ENCODE measurements at regions of chrX and their contacts with region 1.

Region 1: DNA sequence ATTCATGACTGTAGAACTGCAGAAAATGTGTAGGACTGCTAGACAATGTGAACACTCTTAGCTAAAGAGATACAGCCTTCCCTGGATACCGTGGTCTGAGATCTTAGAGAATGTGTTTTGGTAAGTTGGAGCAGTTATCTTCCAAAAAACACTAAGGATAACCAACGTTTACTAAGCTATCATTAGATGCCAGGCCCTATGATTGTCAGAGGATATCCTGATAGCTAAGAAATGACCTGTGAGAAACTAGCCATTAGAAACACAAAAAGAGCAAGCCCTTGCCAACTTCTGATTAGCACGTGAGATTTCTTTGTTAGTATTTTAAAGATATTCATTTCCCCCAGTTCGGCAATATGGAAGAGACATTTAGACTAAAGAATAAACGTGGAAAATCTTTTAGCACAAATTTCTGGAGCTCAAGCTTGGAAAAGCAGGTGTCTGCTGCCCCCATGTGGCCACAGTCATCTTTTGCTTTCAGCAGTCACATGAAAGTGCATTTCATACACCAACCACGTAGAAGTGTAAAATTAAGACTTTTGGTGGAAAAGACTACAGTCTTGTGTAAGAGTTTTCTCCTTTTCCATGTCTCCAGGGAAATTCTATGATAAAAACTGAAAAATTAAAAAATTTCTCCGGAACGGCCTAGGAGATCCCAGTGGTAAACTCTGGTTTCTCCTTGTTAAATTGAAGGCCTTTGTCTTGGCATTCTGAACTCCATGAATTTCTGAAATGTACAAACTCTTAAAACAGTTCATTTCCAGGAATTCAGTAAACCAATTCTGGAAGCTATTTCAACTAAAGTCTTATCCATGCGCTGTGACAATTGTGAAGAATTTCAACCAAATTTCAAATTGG is 136.4 kb downstream of the ZNF674 start:
- DNase-seq: peak; percentile 72
- H3K4me3 Mint-ChIP-seq: no peak overlapping the region
- H3K27ac Mint-ChIP-seq: no peak overlapping the region
- H3K4me1 Mint-ChIP-seq: no peaks in the 10 kb centered on the region
- H3K27me3 Mint-ChIP-seq: peaks cover 14% of the 10 kb centered on the region
- CTCF ChIP-seq: peak; percentile 80

Region 2: GRCh38 chrX:45322382-45322781 is 1086.4 kb before region 1 on chrX:
- CTCF ChIA-PET with region 1: interaction called, 38 read pairs
- POLR2A ChIA-PET with region 1: interaction called, 5 read pairs
- intact Hi-C with region 1: loop called (anchors 1 kb)
- DNase-seq: peak; percentile 77
- H3K4me3 Mint-ChIP-seq: no peak overlapping the region
- H3K27ac Mint-ChIP-seq: no peak overlapping the region
- H3K4me1 Mint-ChIP-seq: no peaks in the 10 kb centered on the region
- H3K27me3 Mint-ChIP-seq: peaks cover 68% of the 10 kb centered on the region
- CTCF ChIP-seq: peak; percentile 63

Region 3: DNA sequence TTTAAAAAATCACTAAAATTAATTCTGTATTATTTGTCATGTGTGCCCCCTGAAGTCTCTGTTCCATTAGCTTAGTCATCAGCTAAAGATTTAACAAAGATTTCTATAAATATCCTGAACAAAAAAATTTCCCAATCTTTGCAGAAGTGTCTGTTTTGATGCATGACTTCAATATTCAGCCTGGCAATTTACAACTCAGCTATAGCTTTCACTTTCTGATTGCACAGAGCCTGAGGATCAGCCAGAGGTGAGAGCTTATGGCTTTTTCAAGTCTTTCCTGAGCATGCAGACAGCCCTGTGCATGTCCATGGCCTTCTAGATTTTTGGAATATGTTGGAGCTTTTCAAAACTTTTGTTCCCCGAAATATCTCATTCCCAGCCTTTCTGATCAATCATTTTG is 283.7 kb before region 1 on chrX:
- CTCF ChIA-PET with region 1: no interaction called
- POLR2A ChIA-PET with region 1: no interaction called
- intact Hi-C with region 1: no loop called
- DNase-seq: no peak
- H3K4me3 Mint-ChIP-seq: no peak overlapping the region
- H3K27ac Mint-ChIP-seq: no peak overlapping the region
- H3K4me1 Mint-ChIP-seq: no peaks in the 10 kb centered on the region
- H3K27me3 Mint-ChIP-seq: peaks cover 27% of the 10 kb centered on the region
- CTCF ChIP-seq: no peak

Region 4: GRCh38 chrX:46381630-46382029 is 27.1 kb before region 1 on chrX:
- CTCF ChIA-PET with region 1: interaction called, 14 read pairs
- POLR2A ChIA-PET with region 1: no interaction called
- intact Hi-C with region 1: no loop called
- DNase-seq: peak; percentile 40
- H3K4me3 Mint-ChIP-seq: no peak overlapping the region
- H3K27ac Mint-ChIP-seq: no peak overlapping the region
- H3K4me1 Mint-ChIP-seq: no peaks in the 10 kb centered on the region
- H3K27me3 Mint-ChIP-seq: peaks cover 54% of the 10 kb centered on the region
- CTCF ChIP-seq: peak; percentile 53

Region 5: GRCh38 chrX:46398126-46398525 is 10.7 kb before region 1 on chrX:
- CTCF ChIA-PET with region 1: interaction called, 15 read pairs
- POLR2A ChIA-PET with region 1: interaction called, 4 read pairs
- intact Hi-C with region 1: no loop called
- DNase-seq: peak; percentile 35
- H3K4me3 Mint-ChIP-seq: no peak overlapping the region
- H3K27ac Mint-ChIP-seq: no peak overlapping the region
- H3K4me1 Mint-ChIP-seq: no peaks in the 10 kb centered on the region
- H3K27me3 Mint-ChIP-seq: peaks cover 16% of the 10 kb centered on the region
- CTCF ChIP-seq: no peak

Region 6: DNA sequence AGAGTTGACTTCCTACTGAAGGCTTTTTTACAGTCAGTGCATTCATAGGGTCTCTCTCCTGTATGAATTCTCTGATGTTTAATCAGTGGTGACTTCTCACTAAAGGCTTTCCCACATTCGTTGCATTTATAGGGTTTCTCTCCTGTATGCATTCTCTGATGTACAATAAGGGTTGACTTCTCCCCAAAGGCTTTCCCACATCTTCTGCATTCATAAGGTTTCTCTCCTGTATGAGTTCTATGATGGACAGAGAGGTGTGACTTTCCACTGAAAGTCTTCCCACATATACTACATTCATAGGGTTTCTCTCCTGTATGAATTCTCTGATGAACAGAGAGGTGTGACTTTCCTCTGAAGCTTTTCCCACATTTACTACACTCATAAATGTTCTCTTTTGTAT is 91.3 kb after region 1 on chrX:
- CTCF ChIA-PET with region 1: no interaction called
- POLR2A ChIA-PET with region 1: no interaction called
- intact Hi-C with region 1: no loop called
- DNase-seq: no peak
- H3K4me3 Mint-ChIP-seq: no peak overlapping the region
- H3K27ac Mint-ChIP-seq: no peak overlapping the region
- H3K4me1 Mint-ChIP-seq: no peaks in the 10 kb centered on the region
- H3K27me3 Mint-ChIP-seq: no peaks in the 10 kb centered on the region
- CTCF ChIP-seq: no peak

Region 7: GRCh38 chrX:46676399-46677356 is 267.9 kb after region 1 on chrX:
- CTCF ChIA-PET with region 1: no interaction called
- POLR2A ChIA-PET with region 1: no interaction called
- intact Hi-C with region 1: no loop called
- DNase-seq: no peak
- H3K4me3 Mint-ChIP-seq: no peak overlapping the region
- H3K27ac Mint-ChIP-seq: no peak overlapping the region
- H3K4me1 Mint-ChIP-seq: no peaks in the 10 kb centered on the region
- H3K27me3 Mint-ChIP-seq: peaks cover 45% of the 10 kb centered on the region
- CTCF ChIP-seq: no peak